A673 (cell line): ENCODE measurements at regions of chr21 and their contacts with region 1.

Region 1: GRCh38 chr21:44873356-44874239 is at the start of gene PTTG1IP:
- DNase-seq: peak; percentile 99
- H3K4me3 ChIP-seq: peak within 1 kb of the TSS; percentile 94
- H3K27ac ChIP-seq: peak within 1 kb of the TSS; percentile 88
- H3K4me1 ChIP-seq: peaks cover 40% of the 10 kb centered on the region
- H3K27me3 ChIP-seq: no peaks in the 10 kb centered on the region
- CTCF ChIP-seq: no peak
- total RNA-seq, gene PTTG1IP: 216 and 217 TPM in 2 replicates

Region 2: DNA sequence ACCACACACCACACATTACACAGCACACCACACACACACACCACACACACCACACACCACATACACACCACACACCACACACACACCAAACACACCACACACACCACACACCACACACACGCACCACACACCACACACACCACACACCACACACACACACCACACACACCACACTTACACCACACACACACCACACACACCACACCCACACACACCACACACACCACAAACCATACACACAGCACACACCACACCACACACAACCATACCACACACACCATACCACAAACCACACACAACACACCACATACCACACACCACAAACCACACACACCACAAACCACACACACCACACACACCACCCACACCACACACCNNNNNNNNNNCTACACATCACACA is 1405.8 kb before region 1 on chr21:
- CTCF ChIA-PET with region 1: no interaction called
- POLR2A ChIA-PET with region 1: no interaction called
- intact Hi-C with region 1: no loop called
- DNase-seq: no peak
- H3K4me3 ChIP-seq: no peak overlapping the region
- H3K27ac ChIP-seq: no peak overlapping the region
- H3K4me1 ChIP-seq: no peaks in the 10 kb centered on the region
- H3K27me3 ChIP-seq: no peaks in the 10 kb centered on the region
- CTCF ChIP-seq: no peak

Region 3: DNA sequence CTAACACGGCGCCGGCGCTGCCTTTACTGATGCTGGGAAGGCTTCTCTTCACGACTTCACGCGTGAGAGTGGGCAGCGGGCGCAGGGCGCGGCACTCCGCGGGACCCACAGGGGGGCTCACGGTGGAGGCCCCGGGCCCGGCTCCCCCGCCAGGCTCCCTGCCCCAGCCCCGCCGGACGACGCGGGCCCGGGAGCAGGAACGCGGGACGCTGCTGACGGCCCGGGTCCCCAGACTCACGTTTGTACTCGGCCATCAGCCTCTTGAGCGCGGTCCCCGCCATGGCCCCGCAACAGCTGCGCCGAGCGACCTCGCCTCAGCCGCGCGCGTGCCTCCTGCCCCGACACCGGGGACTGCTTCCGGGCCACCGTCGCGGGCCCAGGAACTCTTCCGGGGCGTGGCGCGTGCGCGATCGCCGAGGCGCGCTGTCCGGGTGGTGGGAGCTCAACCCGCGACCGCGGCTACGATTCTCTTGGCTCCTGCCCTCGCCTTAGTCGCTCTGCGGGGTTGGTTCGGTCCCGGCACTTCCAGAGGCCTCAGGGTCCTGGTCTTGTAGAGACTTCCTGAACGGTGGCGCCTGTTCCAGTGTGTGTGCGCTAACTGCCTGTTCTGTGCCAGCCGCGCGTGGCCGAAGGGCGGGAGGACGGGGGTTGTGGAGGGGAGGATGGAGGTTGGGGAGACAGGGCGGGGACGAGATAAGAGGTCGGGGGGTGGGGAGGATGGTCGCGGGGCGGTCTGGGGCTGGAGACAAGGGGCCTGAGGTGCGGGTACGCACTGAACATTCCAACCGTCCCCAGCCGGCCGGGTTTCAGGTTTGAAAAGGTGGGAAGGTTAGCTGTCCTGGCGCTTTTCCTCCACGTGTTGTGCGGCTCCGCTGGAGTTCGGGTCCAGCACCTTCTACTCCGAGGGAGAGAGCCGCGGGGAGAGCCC is 71.9 kb before region 1 on chr21 and contains the start of gene UBE2G2:
- CTCF ChIA-PET with region 1: no interaction called
- POLR2A ChIA-PET with region 1: no interaction called
- intact Hi-C with region 1: loop called (anchors 5 kb)
- DNase-seq: peak; percentile 93
- H3K4me3 ChIP-seq: peak within 1 kb of the TSS; percentile 67
- H3K27ac ChIP-seq: peak within 1 kb of the TSS; percentile 93
- H3K4me1 ChIP-seq: peaks cover 23% of the 10 kb centered on the region
- H3K27me3 ChIP-seq: no peaks in the 10 kb centered on the region
- CTCF ChIP-seq: no peak
- total RNA-seq, gene UBE2G2: 204 and 212 TPM in 2 replicates

Region 4: GRCh38 chr21:45109831-45110492 is 236.4 kb after region 1 on chr21:
- CTCF ChIA-PET with region 1: no interaction called
- POLR2A ChIA-PET with region 1: no interaction called
- intact Hi-C with region 1: no loop called
- DNase-seq: no peak
- H3K4me3 ChIP-seq: no peak overlapping the region
- H3K27ac ChIP-seq: no peak overlapping the region
- H3K4me1 ChIP-seq: peaks cover 22% of the 10 kb centered on the region
- H3K27me3 ChIP-seq: no peaks in the 10 kb centered on the region
- CTCF ChIP-seq: no peak